ENCODE measurements at regions of chr9 and their contacts with region 1.

Region 1: GRCh38 chr9:33076358-33077004 is at the start of gene SMU1:
- DNase-seq: peak; percentile 98
- H3K4me3 Mint-ChIP-seq: peak within 1 kb of the TSS; percentile 100
- H3K27ac Mint-ChIP-seq: peak within 1 kb of the TSS; percentile 99
- H3K4me1 Mint-ChIP-seq: peaks cover 42% of the 10 kb centered on the region
- H3K27me3 Mint-ChIP-seq: no peaks in the 10 kb centered on the region
- total RNA-seq, gene SMU1: 25.8 to 26.1 TPM

Region 2: DNA sequence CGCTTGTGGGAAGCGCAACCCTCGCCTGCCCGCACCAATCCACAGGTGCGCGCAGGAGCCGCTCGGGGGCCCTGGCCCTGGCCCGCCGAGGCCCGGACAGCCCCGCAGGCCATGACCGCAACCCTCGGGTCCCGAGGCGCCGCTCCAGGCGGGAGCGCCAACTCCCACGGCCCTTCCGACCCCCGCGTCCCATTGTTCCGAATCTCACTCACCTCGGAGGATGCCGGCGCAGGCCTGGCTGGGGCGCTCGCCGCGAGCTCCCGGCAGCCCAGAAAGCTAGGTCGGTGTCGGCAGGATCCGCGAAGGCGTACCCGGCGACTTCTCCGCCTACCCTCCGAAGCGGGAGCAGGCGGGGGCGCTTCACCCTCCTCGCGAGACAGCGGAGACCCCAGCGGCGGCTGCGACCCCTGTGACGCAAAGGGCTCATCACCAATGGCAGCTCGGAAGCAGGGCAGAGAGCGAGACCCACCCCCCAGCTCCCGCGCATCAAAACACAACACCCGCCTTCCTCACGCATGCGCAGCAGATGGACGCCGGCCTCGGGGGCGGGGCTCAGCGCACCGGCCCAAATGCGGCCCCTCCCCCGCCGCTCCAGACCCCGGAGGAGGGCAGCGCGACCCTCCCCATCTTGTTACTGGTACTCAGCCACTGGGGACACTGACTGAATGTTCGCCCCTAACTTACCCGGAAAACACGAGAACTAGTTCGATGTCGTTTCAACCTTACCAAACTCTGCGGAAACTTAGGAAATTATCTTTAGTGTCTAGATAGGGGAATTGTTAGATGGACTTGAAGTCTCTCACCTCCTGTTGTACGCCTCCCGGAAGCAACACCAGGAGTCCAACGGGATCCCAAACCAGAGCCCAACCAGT is 525.7 kb before region 1 on chr9:
- CTCF ChIA-PET with region 1: no interaction called
- POLR2A ChIA-PET with region 1: no interaction called
- intact Hi-C with region 1: loop called (anchors 2 kb)
- DNase-seq: peak; percentile 95
- H3K4me3 Mint-ChIP-seq: peak overlapping the region; percentile 99
- H3K27ac Mint-ChIP-seq: peak overlapping the region; percentile 100
- H3K4me1 Mint-ChIP-seq: peaks cover 48% of the 10 kb centered on the region
- H3K27me3 Mint-ChIP-seq: no peaks in the 10 kb centered on the region

Region 3: DNA sequence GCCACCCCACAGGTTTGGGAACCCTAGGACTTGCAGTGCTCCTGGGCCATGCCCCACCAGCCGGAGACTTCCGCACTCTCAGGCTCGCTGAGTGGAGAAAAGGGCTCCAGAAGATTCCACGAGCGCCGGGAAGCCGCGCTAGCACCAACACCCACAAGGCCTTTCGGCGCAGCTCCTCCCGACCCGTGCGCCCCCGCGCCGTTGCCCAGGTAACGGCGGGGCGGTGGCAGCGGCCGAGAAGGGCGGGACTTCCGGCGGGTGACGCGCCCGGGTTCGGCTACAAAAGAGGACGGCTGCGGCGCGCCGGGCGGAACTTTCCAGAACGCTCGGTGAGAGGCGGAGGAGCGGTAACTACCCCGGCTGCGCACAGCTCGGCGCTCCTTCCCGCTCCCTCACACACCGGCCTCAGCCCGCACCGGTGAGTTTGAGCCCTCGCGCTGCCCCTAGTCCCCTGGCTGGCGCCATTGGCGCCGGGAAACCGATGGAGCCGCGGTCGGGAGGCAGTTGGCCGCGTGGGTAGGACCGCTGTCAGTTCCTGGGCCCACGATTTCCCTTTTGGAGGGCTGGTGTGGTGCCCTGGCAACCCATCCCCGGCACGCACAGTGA is 51.4 kb before region 1 on chr9 and contains the start of gene DNAJA1:
- CTCF ChIA-PET with region 1: no interaction called
- POLR2A ChIA-PET with region 1: interaction called, 14 read pairs
- intact Hi-C with region 1: loop called (anchors 1 kb)
- DNase-seq: peak; percentile 96
- H3K4me3 Mint-ChIP-seq: peak within 1 kb of the TSS; percentile 98
- H3K27ac Mint-ChIP-seq: peak within 1 kb of the TSS; percentile 95
- H3K4me1 Mint-ChIP-seq: peaks cover 57% of the 10 kb centered on the region
- H3K27me3 Mint-ChIP-seq: no peaks in the 10 kb centered on the region
- total RNA-seq, gene DNAJA1: 173 to 184 TPM

Region 4: GRCh38 chr9:33159760-33160127 is 83.3 kb after region 1 on chr9:
- CTCF ChIA-PET with region 1: interaction called, 6 read pairs
- POLR2A ChIA-PET with region 1: interaction called, 10 read pairs
- intact Hi-C with region 1: no loop called
- DNase-seq: peak; percentile 85
- H3K4me3 Mint-ChIP-seq: peak overlapping the region; percentile 66
- H3K27ac Mint-ChIP-seq: peak overlapping the region; percentile 97
- H3K4me1 Mint-ChIP-seq: peaks cover 94% of the 10 kb centered on the region
- H3K27me3 Mint-ChIP-seq: no peaks in the 10 kb centered on the region

Region 5: DNA sequence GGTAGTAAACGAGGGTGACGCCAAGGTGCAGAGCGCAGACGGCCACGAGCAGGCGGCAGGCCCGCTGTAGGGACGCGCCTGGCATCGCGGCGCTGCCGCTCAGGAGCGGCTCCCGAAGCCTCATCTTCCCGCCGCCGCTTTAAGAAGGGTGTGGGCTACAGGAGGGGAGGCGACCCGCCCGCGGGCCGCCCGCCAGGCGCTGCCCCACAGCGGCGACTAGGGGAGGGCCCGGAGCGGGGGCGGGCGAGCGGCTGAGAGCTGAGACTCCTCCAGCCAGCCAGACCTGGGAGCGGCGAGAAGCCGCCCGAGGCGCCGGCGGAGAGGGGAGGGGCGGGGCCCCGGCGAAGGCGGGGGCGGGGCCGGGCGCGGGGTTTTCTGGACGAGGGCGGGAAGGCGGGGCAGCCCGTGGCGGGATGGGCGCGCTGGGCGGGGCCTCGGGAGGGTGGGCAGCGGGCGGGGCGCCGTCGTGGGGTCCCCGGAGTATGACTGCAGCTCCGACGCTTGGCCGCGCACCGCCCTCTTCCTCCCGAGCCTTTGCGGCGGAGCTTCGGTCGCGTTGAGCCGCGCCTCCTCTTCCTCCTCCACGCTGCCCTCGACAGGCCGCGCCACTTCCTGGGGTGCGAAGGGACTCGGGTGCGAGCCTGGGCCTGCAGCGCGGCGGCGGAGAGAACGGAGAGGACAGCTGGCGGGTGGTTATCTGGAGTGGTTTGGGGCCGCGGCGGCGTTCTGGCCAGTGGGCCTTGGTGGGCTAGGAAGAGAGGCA is 90.7 kb after region 1 on chr9 and contains the start of gene B4GALT1:
- CTCF ChIA-PET with region 1: interaction called, 18 read pairs
- POLR2A ChIA-PET with region 1: interaction called, 10 read pairs
- intact Hi-C with region 1: loop called (anchors 1 kb)
- DNase-seq: peak; percentile 98
- H3K4me3 Mint-ChIP-seq: peak within 1 kb of the TSS; percentile 95
- H3K27ac Mint-ChIP-seq: peak within 1 kb of the TSS; percentile 97
- H3K4me1 Mint-ChIP-seq: peaks cover 48% of the 10 kb centered on the region
- H3K27me3 Mint-ChIP-seq: no peaks in the 10 kb centered on the region
- total RNA-seq, gene B4GALT1: 76.6 to 78.0 TPM

Region 6: GRCh38 chr9:33225319-33226149 is 149.1 kb after region 1 on chr9:
- CTCF ChIA-PET with region 1: interaction called, 33 read pairs
- POLR2A ChIA-PET with region 1: no interaction called
- intact Hi-C with region 1: loop called (anchors 1 kb)
- DNase-seq: peak; percentile 80
- H3K4me3 Mint-ChIP-seq: no peak overlapping the region
- H3K27ac Mint-ChIP-seq: peak overlapping the region; percentile 20
- H3K4me1 Mint-ChIP-seq: peaks cover 10% of the 10 kb centered on the region
- H3K27me3 Mint-ChIP-seq: no peaks in the 10 kb centered on the region